ENCODE measurements at regions of chr2 and their contacts with region 1.

Region 1: GRCh38 chr2:172465417-172466334 is 38.3 kb downstream of the ITGA6 start:
- DNase-seq: peak; percentile 26 to 43
- ATAC-seq: peak; percentile 67 to 85
- H3K4me3 ChIP-seq: peak overlapping the region in 2 of 4 donors; percentile 5 to 35
- H3K27ac ChIP-seq: peak overlapping the region in 2 of 4 donors; percentile 48 to 59
- H3K4me1 ChIP-seq: peaks cover 0 to 3% of the 10 kb centered on the region in 2 donors
- H3K27me3 ChIP-seq: no peaks in the 10 kb centered on the region
- CTCF ChIP-seq: peak; percentile 65 to 81 (median 74)
- POLR2A ChIP-seq: no peak

Region 2: DNA sequence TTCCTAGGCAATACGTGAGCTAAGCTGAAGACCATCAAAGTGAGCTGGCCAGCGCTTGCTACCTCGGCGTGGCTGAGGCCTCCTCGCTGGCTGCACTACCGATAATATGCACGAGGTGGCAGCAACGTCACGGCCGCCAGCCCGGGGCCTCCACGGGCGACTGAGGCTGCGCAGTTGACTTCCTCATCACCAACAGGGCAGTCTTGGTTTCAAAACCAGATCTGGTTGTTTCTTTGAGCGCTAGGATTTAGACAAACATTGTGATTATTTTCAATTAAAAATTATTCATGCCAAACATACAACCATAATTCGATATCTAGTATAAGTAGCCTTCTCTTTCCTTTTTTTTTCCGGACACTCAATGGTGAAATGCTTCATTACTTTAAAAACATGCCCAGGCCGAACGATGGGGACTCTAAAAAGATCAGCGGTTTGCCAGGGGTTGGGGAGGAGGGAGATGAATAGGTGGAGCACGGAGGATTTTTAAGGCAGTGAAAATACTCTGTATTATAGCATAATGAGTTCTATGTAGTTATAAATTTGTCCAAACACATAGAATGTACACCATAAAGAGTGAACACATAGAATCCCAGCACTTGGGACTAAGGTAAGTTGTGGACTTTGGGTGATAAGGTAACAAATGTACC is 891.4 kb before region 1 on chr2:
- in situ Hi-C with region 1: no loop called
- intact Hi-C with region 1: loop called (anchors 10 kb)
- DNase-seq: peak; percentile 29 to 48
- ATAC-seq: peak; percentile 63 to 75
- H3K4me3 ChIP-seq: no peak overlapping the region
- H3K27ac ChIP-seq: no peak overlapping the region
- H3K4me1 ChIP-seq: no peaks in the 10 kb centered on the region
- H3K27me3 ChIP-seq: no peaks in the 10 kb centered on the region
- CTCF ChIP-seq: peak; percentile 45 to 92 (median 75)
- POLR2A ChIP-seq: no peak

Region 3: GRCh38 chr2:172172513-172173173 is 293.0 kb before region 1 on chr2:
- in situ Hi-C with region 1: loop called in 3 of 4 experiments (anchors 5 to 10 kb)
- intact Hi-C with region 1: loop called (anchors 1 kb)
- DNase-seq: peak; percentile 21 to 25
- ATAC-seq: peak; percentile 66 to 82
- H3K4me3 ChIP-seq: peak overlapping the region; percentile 52 to 71 (median 58)
- H3K27ac ChIP-seq: no peak overlapping the region
- H3K4me1 ChIP-seq: peaks cover 0 to 10% of the 10 kb centered on the region in 2 donors
- H3K27me3 ChIP-seq: peaks cover 0 to 7% (median 5%) of the 10 kb centered on the region in 3 donors
- CTCF ChIP-seq: peak; percentile 67 to 85 (median 77)
- POLR2A ChIP-seq: no peak

Region 4: GRCh38 chr2:172179045-172179701 is 286.5 kb before region 1 on chr2:
- in situ Hi-C with region 1: loop called in 3 of 4 experiments (anchors 5 to 10 kb)
- intact Hi-C with region 1: no loop called
- DNase-seq: no peak
- ATAC-seq: no peak
- H3K4me3 ChIP-seq: no peak overlapping the region
- H3K27ac ChIP-seq: no peak overlapping the region
- H3K4me1 ChIP-seq: no peaks in the 10 kb centered on the region
- H3K27me3 ChIP-seq: no peaks in the 10 kb centered on the region
- CTCF ChIP-seq: no peak
- POLR2A ChIP-seq: no peak

Region 5: DNA sequence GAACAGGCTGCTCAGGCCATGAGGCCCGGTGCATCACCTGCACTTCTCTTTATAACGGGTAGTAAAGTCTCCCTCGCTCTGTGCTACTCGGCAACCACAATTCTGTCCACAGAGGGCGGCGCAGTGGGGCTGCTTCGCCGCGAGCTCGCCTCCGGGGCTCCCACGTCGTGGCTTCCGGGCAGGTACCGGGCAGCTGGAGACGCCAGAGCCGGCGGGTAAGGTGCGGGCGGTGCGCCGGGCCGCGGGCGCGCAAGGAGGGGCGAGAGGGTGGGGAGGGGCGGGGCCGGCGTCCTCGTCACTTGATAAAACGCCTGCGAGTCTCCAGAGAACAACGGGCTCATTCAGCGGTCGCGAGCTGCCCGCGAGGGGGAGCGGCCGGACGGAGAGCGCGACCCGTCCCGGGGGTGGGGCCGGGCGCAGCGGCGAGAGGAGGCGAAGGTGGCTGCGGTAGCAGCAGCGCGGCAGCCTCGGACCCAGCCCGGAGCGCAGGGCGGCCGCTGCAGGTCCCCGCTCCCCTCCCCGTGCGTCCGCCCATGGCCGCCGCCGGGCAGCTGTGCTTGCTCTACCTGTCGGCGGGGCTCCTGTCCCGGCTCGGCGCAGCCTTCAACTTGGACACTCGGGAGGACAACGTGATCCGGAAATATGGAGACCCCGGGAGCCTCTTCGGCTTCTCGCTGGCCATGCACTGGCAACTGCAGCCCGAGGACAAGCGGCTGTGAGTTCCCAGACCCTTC is 38.3 kb before region 1 on chr2 and contains the start of gene ITGA6:
- in situ Hi-C with region 1: no loop called
- intact Hi-C with region 1: loop called (anchors 2 kb)
- DNase-seq: peak; percentile 49 to 59
- ATAC-seq: peak; percentile 69 to 72
- H3K4me3 ChIP-seq: peak within 1 kb of the TSS; percentile 65 to 88 (median 76)
- H3K27ac ChIP-seq: peak within 1 kb of the TSS; percentile 73 to 92 (median 81)
- H3K4me1 ChIP-seq: peaks cover 19 to 23% of the 10 kb centered on the region in 2 donors
- H3K27me3 ChIP-seq: no peaks in the 10 kb centered on the region
- CTCF ChIP-seq: peak in 1 of 5 experiments; percentile 40
- POLR2A ChIP-seq: peak; percentile 52 to 84
- total RNA-seq, gene ITGA6: 22.5 to 40.6 (median 29.2) TPM

Measured in gastrocnemius medialis (tissue), 4 donors.